ENCODE measurements at regions of chr17 and their contacts with region 1.

Region 1: DNA sequence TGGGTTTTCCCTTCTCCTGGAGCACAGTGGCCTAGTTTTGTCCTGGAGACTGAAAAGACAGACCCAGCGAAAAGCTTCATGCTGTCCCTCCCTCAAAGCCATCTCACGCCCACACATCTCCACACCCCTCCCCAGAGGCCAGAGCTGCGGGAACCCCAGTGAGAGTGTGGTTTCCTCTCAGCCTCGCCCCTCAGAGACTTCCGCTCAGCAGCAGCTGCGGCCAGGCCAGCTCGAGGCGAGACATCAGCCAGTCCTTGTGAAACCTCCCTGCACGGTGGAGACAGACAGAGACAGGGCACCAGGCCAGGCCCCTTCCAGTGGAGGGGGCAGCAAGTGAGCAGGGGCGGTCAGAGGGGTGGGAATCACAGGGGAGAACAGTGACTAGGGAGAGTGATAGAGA is 77.0 kb upstream of the TNRC6C start:
- DNase-seq: peak; percentile 86 to 95 (median 94)
- ATAC-seq: peak; percentile 70 to 94 (median 94)
- H3K4me3 ChIP-seq: peak overlapping the region in 1 of 12 donors; percentile 28
- H3K27ac ChIP-seq: peak overlapping the region in 11 of 12 donors; percentile 26 to 91 (median 68)
- H3K4me1 ChIP-seq: peaks cover 15 to 49% (median 34%) of the 10 kb centered on the region in 12 donors
- H3K27me3 ChIP-seq: no peaks in the 10 kb centered on the region
- CTCF ChIP-seq: no peak
- POLR2A ChIP-seq: no peak

Region 2: GRCh38 chr17:77724876-77725615 is 156.5 kb before region 1 on chr17:
- intact Hi-C with region 1: loop called in 1 of 10 experiments (anchors 5 kb)
- DNase-seq: no peak
- ATAC-seq: no peak
- H3K4me3 ChIP-seq: no peak overlapping the region
- H3K27ac ChIP-seq: no peak overlapping the region
- H3K4me1 ChIP-seq: peaks cover 0 to 27% (median 8%) of the 10 kb centered on the region in 12 donors
- H3K27me3 ChIP-seq: no peaks in the 10 kb centered on the region
- CTCF ChIP-seq: no peak
- POLR2A ChIP-seq: no peak

Region 3: DNA sequence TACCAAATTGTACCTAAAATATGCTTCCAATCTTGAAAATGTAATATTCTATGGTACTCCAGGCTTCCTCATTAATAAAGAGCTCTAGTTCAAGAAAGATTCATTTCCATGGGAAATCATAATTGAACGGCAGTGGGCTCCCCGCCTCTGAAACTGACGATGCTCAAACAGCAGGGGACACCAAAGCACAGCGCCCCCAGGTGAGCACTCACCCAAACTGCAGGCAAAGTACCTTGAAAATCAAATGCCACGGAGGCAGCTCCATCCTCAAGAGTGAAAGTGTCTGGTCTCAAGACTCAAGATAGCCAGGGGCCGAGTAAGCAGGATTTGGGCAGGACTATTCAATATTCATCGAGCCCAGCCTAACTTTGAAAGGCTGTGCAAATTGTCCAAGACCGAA is 140.4 kb before region 1 on chr17:
- intact Hi-C with region 1: no loop called
- DNase-seq: no peak
- ATAC-seq: no peak
- H3K4me3 ChIP-seq: no peak overlapping the region
- H3K27ac ChIP-seq: no peak overlapping the region
- H3K4me1 ChIP-seq: peaks cover 0 to 39% (median 24%) of the 10 kb centered on the region in 12 donors
- H3K27me3 ChIP-seq: no peaks in the 10 kb centered on the region
- CTCF ChIP-seq: peak in 6 of 12 donors; percentile 3 to 37 (median 18)
- POLR2A ChIP-seq: no peak

Region 4: DNA sequence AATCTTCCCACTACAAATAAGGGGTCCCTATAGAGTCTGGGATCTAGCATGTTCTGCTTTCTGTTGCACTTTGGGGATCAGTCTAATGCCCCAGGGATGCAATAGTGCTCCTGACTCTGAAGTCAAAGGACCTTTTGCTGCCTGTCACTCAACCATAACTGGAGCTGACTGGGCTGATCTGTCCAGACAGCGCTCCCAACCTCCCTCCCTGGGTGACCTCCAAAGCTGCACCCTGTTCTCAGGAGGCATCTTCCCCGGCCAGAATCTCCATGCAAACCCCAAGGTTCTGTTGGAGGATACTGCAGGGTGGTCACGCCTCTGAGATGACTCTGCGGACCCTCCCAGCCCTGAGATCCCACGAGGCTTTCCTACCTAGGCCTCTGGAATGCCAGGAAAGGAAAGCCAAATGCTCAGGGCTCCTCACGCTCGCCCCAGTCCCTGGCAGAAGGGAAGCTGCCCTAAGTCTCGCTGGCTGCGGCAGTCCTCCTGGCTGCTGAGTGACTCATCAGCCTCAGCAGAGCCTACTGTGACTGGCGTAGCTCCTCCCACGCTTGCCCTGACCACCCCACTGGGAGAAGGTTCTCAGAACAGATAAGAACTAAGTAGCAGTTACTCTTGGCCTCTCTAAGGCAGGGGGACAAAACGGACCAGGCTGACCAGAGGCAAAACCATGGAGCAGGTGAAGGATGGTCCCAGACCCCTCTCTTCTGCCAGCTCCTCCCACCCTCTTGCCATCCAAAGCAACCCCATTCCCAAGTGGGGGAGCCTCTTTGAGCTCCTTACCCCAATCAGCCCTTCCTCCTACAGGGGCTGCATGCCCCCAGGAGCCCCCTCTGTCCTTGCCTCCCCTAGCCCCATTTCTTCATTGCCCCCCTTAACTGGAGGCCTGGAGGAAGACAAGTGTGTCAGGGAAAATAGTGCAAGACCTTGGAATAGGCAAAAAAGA is 47.1 kb before region 1 on chr17:
- intact Hi-C with region 1: loop called in 3 of 10 experiments (anchors 2 to 5 kb)
- DNase-seq: peak; percentile 52 to 84 (median 82)
- ATAC-seq: peak in 3 of 4 donors; percentile 42 to 77 (median 68)
- H3K4me3 ChIP-seq: peak overlapping the region in 1 of 12 donors; percentile 24
- H3K27ac ChIP-seq: peak overlapping the region in 9 of 12 donors; percentile 8 to 70 (median 44)
- H3K4me1 ChIP-seq: peaks cover 13 to 69% (median 48%) of the 10 kb centered on the region in 12 donors
- H3K27me3 ChIP-seq: no peaks in the 10 kb centered on the region
- CTCF ChIP-seq: no peak
- POLR2A ChIP-seq: no peak

Region 5: DNA sequence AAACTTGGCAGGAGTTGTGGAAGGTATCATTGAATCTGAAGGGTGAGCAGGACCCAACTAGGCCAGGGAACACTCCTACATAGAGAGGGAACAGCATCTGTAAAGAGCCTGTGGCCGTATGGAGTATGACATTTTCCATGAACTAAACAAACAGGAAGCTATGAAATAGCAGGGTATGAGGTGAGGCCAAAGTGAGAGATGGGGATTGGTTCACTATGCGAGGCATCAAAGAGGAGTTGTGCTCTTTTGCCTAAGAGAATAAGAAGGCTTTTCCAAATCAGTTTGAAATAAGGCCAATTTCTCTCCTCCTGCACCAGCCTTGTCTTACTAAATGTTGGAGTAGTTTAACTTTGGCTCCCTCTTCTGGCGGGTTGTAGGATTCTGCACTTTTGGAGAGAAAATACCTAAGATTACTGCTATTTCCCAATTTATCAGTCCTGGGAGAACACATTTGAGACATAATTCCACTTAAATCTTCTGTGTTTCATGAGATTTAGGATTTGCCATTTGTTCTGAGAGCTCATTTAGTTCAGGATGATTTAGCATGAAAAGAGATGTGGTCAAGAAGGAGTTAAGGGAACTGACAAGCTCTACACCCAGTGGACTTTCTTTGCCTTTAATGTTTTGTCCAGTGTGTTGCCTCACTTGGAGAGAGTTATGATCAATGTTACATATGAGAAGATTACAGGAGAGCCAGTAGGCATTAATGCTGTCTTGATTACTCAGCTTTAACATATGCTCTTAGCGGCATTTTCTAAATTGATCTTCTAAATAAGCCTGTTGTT is 132.3 kb after region 1 on chr17:
- intact Hi-C with region 1: loop called in 1 of 10 experiments (anchors 10 kb)
- DNase-seq: peak in 3 of 5 donors; percentile 35 to 54 (median 35)
- ATAC-seq: peak; percentile 18 to 66 (median 56)
- H3K4me3 ChIP-seq: no peak overlapping the region
- H3K27ac ChIP-seq: peak overlapping the region in 1 of 12 donors; percentile 6
- H3K4me1 ChIP-seq: peaks cover 0 to 19% (median 6%) of the 10 kb centered on the region in 12 donors
- H3K27me3 ChIP-seq: no peaks in the 10 kb centered on the region
- CTCF ChIP-seq: peak; percentile 32 to 91 (median 77)
- POLR2A ChIP-seq: no peak

Measured in heart left ventricle (tissue), 16 donors.